B cell (primary cell): ENCODE measurements at regions of chr1 and their contacts with region 1.

Region 1: DNA sequence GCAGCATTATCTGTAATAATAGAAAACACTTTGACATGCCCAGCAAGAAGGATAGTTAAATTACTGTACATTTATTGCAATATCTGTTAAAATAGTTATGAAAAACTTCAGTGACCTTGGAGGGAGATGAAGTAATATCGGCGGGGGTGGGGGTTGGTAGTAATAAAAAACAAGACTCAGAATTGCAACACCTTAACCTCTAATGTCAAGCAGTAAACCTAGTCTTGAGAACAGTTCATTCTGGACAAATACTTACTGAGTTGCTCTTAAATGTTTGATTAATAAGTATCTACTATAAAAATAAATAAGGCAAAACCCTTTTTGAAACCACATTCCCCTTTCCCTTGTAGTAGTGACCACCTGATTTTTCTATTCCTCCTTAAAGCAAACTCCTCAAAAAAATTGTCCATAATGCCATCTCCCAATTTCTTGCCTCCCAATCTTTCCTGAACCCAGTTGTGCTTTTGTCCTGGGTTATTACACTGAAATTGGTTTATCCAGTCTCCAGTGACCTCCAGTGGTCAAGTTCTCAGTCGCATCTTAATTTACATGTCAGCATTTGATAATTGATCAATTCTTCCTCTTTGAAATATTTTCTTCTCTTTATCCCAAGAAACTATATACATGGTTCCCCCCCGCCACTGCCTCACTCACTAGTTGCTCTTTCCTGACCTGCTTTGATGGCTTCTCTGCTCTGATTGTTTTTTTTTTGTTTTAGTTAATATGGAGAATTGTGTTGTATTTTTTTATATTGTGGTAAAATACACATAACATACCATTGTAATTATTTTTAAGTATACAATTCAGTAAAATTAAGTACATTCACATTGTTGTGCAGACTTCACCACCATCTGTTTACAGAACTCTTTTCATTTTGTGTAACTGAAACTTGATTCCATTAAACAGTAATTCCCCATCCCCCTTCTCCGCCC is 36.8 kb downstream of the RAP1A start:
- DNase-seq: peak; percentile 66
- ATAC-seq: no peak
- H3K4me3 ChIP-seq: no peak overlapping the region
- H3K4me3 Mint-ChIP-seq: no peak overlapping the region
- H3K27ac ChIP-seq: no peak overlapping the region
- H3K27ac Mint-ChIP-seq: no peak overlapping the region
- H3K4me1 ChIP-seq: peaks cover 30 to 33% of the 10 kb centered on the region in 2 donors
- H3K4me1 Mint-ChIP-seq: peaks cover 37% of the 10 kb centered on the region
- H3K27me3 ChIP-seq: no peaks in the 10 kb centered on the region
- H3K27me3 Mint-ChIP-seq: no peaks in the 10 kb centered on the region
- CTCF ChIP-seq: peak; percentile 75

Region 2: DNA sequence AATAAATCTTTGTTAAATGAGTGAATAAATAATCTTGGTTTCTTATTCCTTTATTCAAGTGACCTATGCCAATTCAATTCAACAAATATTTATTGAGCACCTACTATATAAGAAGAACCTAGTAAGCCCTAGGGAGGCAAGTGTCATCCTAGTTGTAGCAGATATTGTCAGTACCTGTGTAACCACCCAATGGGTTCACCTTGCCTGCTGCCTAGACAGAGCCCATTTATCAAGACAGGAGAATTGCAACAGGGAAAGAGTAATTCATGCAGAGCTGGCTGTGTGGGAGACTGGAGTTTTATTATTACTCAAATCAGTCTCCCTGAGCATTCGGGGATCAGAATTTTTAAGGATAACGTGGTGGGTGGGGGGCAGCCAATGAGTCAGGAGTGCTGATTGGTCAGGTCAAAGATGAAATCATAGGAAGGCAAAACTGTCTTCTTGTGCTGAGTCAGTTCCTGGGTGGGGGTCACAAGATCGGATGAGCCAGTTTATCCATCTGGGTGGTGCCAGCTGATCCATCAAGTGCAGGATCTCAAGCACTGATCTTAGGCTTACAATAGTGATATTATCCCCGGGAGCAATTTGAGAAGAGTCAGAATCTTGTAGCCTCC is 927.9 kb before region 1 on chr1:
- CTCF ChIA-PET with region 1: no interaction called
- POLR2A ChIA-PET with region 1: interaction called, 10 read pairs
- intact Hi-C with region 1: no loop called
- DNase-seq: no peak
- ATAC-seq: no peak
- H3K4me3 ChIP-seq: no peak overlapping the region
- H3K4me3 Mint-ChIP-seq: no peak overlapping the region
- H3K27ac ChIP-seq: no peak overlapping the region
- H3K27ac Mint-ChIP-seq: no peak overlapping the region
- H3K4me1 ChIP-seq: peaks cover 17 to 22% of the 10 kb centered on the region in 2 donors
- H3K4me1 Mint-ChIP-seq: peaks cover 27% of the 10 kb centered on the region
- H3K27me3 ChIP-seq: peaks cover 0 to 1% (median 0%) of the 10 kb centered on the region in 4 experiments
- H3K27me3 Mint-ChIP-seq: peaks cover 4% of the 10 kb centered on the region
- CTCF ChIP-seq: no peak

Region 3: GRCh38 chr1:111481387-111482221 is 174.7 kb before region 1 on chr1:
- CTCF ChIA-PET with region 1: interaction called, 13 read pairs
- POLR2A ChIA-PET with region 1: no interaction called
- intact Hi-C with region 1: loop called (anchors 1 kb)
- DNase-seq: peak; percentile 76
- ATAC-seq: peak; percentile 52
- H3K4me3 ChIP-seq: no peak overlapping the region
- H3K4me3 Mint-ChIP-seq: no peak overlapping the region
- H3K27ac ChIP-seq: no peak overlapping the region
- H3K27ac Mint-ChIP-seq: peak overlapping the region; percentile 43
- H3K4me1 ChIP-seq: peaks cover 38 to 42% of the 10 kb centered on the region in 2 donors
- H3K4me1 Mint-ChIP-seq: peaks cover 46% of the 10 kb centered on the region
- H3K27me3 ChIP-seq: no peaks in the 10 kb centered on the region
- H3K27me3 Mint-ChIP-seq: no peaks in the 10 kb centered on the region
- CTCF ChIP-seq: peak; percentile 55

Region 4: GRCh38 chr1:111559736-111560279 is 96.5 kb before region 1 on chr1:
- CTCF ChIA-PET with region 1: no interaction called
- POLR2A ChIA-PET with region 1: no interaction called
- intact Hi-C with region 1: loop called (anchors 5 kb)
- DNase-seq: no peak
- ATAC-seq: no peak
- H3K4me3 ChIP-seq: no peak overlapping the region
- H3K4me3 Mint-ChIP-seq: no peak overlapping the region
- H3K27ac ChIP-seq: no peak overlapping the region
- H3K27ac Mint-ChIP-seq: no peak overlapping the region
- H3K4me1 ChIP-seq: no peaks in the 10 kb centered on the region
- H3K4me1 Mint-ChIP-seq: no peaks in the 10 kb centered on the region
- H3K27me3 ChIP-seq: no peaks in the 10 kb centered on the region
- H3K27me3 Mint-ChIP-seq: no peaks in the 10 kb centered on the region
- CTCF ChIP-seq: no peak

Region 5: GRCh38 chr1:111769517-111770146 is 113.3 kb after region 1 on chr1:
- CTCF ChIA-PET with region 1: interaction called, 3 read pairs
- POLR2A ChIA-PET with region 1: no interaction called
- intact Hi-C with region 1: loop called (anchors 10 kb)
- DNase-seq: peak; percentile 78
- ATAC-seq: peak; percentile 51
- H3K4me3 ChIP-seq: no peak overlapping the region
- H3K4me3 Mint-ChIP-seq: no peak overlapping the region
- H3K27ac ChIP-seq: no peak overlapping the region
- H3K27ac Mint-ChIP-seq: no peak overlapping the region
- H3K4me1 ChIP-seq: no peaks in the 10 kb centered on the region
- H3K4me1 Mint-ChIP-seq: no peaks in the 10 kb centered on the region
- H3K27me3 ChIP-seq: no peaks in the 10 kb centered on the region
- H3K27me3 Mint-ChIP-seq: no peaks in the 10 kb centered on the region
- CTCF ChIP-seq: peak; percentile 95